Astrocyte of the cerebellum (primary cell): ENCODE measurements at regions of chr1 and their contacts with region 1.

Region 1: GRCh38 chr1:181497870-181498269 is 14.6 kb downstream of the CACNA1E start:
- DNase-seq: no peak
- H3K4me3 ChIP-seq: no peak overlapping the region
- CTCF ChIP-seq: no peak

Region 2: DNA sequence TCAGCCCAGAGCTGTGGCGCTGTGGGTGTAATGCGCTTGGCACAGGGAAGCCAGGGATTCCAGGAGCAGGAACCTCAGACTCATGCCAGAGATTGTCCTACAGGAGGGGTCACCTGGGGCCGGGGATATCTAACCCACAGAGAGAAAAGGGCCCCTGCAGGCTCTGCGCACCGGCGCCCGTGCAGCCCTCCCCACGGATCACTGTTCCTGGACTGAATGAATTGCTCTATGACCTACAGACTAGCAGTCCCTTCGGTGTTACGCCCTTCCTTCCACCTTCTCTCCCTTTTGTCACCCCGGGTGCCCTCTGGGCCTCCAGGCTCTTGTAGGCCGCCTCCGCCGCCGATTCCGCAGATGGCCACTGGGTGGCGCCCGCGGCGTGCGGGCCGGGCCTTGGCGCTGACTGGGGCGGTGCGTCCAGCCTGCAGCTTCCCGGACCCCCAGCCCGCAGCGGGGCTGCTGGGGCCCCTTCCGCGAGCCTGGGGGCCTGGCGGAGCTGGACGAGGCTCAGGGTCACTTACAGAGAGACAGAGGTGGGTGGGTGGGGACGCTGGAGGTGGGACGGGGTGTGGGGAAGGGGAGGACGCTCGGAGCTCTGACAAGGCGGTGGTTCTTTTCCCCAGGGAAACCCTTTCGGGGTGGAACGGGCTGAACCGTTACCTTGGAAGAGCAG is 308.0 kb before region 1 on chr1:
- in situ Hi-C with region 1: no loop called
- DNase-seq: no peak
- H3K4me3 ChIP-seq: peak overlapping the region; percentile 32
- CTCF ChIP-seq: peak; percentile 99

Region 3: DNA sequence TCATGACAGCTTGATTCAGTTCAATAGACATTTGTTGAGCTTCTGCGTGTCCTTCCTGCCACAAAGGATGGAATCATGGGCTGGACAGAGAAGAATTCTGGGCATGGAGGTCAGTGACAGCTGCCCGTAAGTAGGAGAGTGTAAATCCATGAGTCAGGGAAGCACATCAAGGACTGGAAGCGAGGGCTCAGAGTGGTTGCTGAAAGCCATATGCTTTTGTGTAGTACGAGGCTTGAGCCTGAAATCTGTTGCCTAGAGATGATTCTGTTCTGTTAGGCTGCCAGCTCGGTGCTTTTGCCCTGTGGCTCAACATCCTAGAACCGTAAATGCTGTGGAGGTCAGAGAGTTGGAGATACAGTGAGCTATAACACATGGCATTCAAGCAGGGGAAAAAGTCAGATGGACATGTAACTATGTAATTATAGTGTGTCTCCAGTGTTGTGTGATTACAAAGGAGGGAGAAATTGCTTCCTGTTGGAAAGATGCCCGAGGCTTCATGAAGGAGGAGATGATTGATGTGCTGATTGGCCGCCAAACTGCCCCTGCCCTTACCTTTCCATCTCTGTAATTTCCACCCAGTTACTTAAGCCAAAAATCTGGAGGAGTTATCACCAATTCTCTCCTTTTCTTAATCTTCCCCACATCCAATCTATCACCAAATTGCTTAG is 107.3 kb before region 1 on chr1:
- in situ Hi-C with region 1: loop called (anchors 5 kb)
- DNase-seq: no peak
- H3K4me3 ChIP-seq: no peak overlapping the region
- CTCF ChIP-seq: no peak